ENCODE measurements at regions of chr2 and their contacts with region 1.

Region 1: DNA sequence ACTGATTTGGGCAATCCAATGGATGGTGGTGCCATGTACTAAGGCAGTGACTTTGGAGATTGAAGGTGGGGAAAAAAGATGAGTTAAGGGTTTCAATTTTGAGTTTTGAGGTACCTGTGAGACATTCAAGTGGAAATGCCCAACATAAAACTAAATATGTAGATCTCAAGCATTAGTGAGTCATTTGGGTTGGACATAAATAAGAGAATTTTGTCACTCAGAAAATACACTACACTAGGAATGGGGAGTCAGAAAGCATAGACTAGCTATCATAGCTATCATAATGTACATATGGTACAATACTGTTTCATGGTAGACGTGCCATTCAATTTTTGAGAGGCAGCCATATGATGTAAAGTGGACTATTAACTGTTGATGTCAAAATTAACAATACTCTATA is 56.1 kb downstream of the FBXO11 start:
- DNase-seq: no peak
- H3K4me3 ChIP-seq: no peak overlapping the region
- H3K27ac ChIP-seq: no peak overlapping the region
- H3K4me1 ChIP-seq: no peaks in the 10 kb centered on the region
- CTCF ChIP-seq: no peak

Region 2: GRCh38 chr2:47300609-47301276 is 549.5 kb before region 1 on chr2:
- CTCF ChIA-PET with region 1: no interaction called
- POLR2A ChIA-PET with region 1: no interaction called
- intact Hi-C with region 1: no loop called
- DNase-seq: peak; percentile 66
- H3K4me3 ChIP-seq: no peak overlapping the region
- H3K27ac ChIP-seq: no peak overlapping the region
- H3K4me1 ChIP-seq: peaks cover 14% of the 10 kb centered on the region
- CTCF ChIP-seq: no peak

Region 3: GRCh38 chr2:47815764-47816163 is 34.4 kb before region 1 on chr2:
- CTCF ChIA-PET with region 1: no interaction called
- POLR2A ChIA-PET with region 1: no interaction called
- intact Hi-C with region 1: no loop called
- DNase-seq: peak; percentile 64
- H3K4me3 ChIP-seq: no peak overlapping the region
- H3K27ac ChIP-seq: no peak overlapping the region
- H3K4me1 ChIP-seq: peaks cover 5% of the 10 kb centered on the region
- CTCF ChIP-seq: no peak

Region 4: GRCh38 chr2:48420512-48421197 is 570.5 kb after region 1 on chr2:
- CTCF ChIA-PET with region 1: no interaction called
- POLR2A ChIA-PET with region 1: no interaction called
- intact Hi-C with region 1: loop called (anchors 5 kb)
- DNase-seq: peak; percentile 80
- H3K4me3 ChIP-seq: no peak overlapping the region
- H3K27ac ChIP-seq: no peak overlapping the region
- H3K4me1 ChIP-seq: no peaks in the 10 kb centered on the region
- CTCF ChIP-seq: peak; percentile 98